PC-9 (cell line): ENCODE measurements at regions of chr19 and their contacts with region 1.

Region 1: GRCh38 chr19:17605761-17606745 is 50.6 kb downstream of the COLGALT1 start:
- DNase-seq: peak; percentile 77 to 85
- H3K4me3 ChIP-seq: peak overlapping the region; percentile 58
- H3K27ac ChIP-seq: peak overlapping the region; percentile 62
- H3K4me1 ChIP-seq: no peaks in the 10 kb centered on the region
- H3K27me3 ChIP-seq: peaks cover 33% of the 10 kb centered on the region
- CTCF ChIP-seq: peak; percentile 69

Region 2: DNA sequence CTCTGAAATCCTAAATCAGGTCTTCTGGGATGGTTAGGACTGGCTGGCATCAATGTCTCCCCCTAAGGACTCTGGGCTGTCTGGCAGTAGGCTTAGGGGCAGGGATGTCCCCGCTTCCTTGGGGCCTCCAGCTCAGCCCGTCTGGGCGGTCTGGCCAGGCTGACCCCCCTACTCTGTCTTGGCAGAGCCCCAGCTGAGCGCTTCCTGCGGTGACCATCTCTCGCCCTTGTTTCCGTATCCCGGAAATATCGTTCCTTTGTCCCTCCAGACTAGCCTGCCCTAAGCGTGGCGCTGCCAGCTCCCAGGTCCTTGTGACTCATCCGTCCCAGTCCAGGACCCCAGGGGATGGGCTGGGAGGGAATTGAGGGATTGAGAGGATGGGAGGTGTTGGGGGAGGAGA is 257.4 kb before region 1 on chr19:
- CTCF ChIA-PET with region 1: no interaction called
- POLR2A ChIA-PET with region 1: no interaction called
- intact Hi-C with region 1: no loop called
- DNase-seq: peak; percentile 61
- H3K4me3 ChIP-seq: peak overlapping the region; percentile 24; the same call in 1 of the 2 replicates
- H3K27ac ChIP-seq: no peak overlapping the region
- H3K4me1 ChIP-seq: peaks cover 10% of the 10 kb centered on the region
- H3K27me3 ChIP-seq: no peaks in the 10 kb centered on the region
- CTCF ChIP-seq: no peak

Region 3: GRCh38 chr19:17854061-17854460 is 248.0 kb after region 1 on chr19:
- CTCF ChIA-PET with region 1: no interaction called
- POLR2A ChIA-PET with region 1: interaction called, 20 read pairs
- intact Hi-C with region 1: no loop called
- DNase-seq: peak in 1 of 2 experiments; percentile 22
- H3K4me3 ChIP-seq: no peak overlapping the region
- H3K27ac ChIP-seq: no peak overlapping the region
- H3K4me1 ChIP-seq: peaks cover 19% of the 10 kb centered on the region
- H3K27me3 ChIP-seq: no peaks in the 10 kb centered on the region
- CTCF ChIP-seq: no peak